Activated naive CD4-positive, alpha-beta T cell treated with anti-CD3 and anti-CD28 coated beads for 36 hours (primary cell): ENCODE measurements at regions of chr5 and their contacts with region 1.

Region 1: DNA sequence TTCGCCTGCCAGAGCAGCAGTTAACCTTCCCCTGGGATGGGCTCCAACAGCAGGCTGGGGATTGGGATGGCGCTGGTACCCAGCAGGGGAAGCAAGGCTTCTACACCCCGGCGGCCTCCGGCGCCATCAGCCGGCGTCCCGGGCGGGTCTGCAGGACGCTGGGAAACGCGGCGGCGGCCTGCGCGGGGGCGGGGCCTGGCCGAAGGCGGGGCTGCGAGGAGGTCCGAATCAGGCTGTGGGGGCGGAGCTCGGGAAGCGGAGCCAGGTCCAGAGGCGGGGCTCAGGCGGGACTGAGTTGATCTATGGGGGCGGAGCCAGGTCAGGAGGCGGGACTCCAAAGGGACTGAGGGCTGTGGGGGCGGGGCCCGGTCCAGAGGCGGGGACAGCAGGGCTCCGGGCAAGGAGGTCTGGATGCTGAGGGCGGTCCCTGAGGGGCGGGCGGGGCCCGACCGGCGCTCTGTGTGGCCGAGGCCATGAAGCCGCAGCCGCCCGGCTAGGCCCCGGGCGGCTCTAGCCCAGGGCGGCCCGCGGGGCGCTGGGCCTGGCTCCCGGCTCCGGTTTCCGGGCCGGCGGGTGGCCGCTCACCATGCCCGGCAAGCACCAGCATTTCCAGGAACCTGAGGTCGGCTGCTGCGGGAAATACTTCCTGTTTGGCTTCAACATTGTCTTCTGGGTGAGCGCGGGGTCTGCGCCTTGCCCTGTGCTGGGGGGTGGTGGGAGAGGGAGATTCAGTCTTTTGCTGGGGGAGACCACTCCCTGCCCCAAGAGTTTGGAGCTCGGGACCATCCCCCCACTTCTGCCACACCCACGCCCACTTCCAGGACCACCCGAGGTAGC is at the start of gene TSPAN17:
- DNase-seq: peak; percentile 100
- H3K4me3 Mint-ChIP-seq: peak within 1 kb of the TSS; percentile 86
- H3K27ac Mint-ChIP-seq: peak within 1 kb of the TSS; percentile 86
- H3K4me1 Mint-ChIP-seq: peaks cover 44% of the 10 kb centered on the region
- H3K27me3 Mint-ChIP-seq: no peaks in the 10 kb centered on the region
- total RNA-seq, gene TSPAN17: 17.2 to 17.4 TPM

Region 2: DNA sequence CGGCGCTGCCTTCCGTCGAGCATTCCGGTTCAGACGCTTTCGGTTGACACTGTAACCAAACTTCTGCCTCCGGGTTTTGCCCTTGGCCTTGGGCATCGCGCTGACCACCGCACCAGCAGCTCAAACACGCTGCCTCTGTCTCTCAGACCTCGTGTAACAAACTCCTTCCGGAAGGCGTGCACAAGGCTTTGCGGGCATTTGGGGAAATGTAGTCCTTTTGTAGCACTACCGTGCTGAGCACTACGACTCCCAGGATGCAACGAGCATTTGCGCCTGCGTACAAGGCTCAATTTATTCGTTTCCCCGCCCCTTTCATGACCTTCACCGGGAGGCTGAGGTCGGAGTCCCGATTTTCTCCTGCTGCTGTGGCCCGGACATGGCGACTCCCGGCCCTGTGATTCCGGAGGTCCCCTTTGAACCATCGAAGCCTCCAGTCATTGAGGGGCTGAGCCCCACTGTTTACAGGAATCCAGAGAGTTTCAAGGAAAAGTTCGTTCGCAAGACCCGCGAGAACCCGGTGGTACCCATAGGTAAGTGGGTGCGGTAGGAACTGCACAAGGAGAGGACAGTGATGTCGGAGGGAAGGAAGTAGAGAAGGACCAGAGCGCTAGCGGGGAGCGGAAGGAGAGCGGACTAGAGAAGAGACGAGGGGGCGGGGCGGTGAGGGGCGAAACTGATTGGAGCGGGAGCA is 258.7 kb before region 1 on chr5 and contains the starts of genes HIGD2A and NOP16:
- CTCF ChIA-PET with region 1: no interaction called
- intact Hi-C with region 1: loop called (anchors 1 kb)
- DNase-seq: peak; percentile 100
- H3K4me3 Mint-ChIP-seq: peak within 1 kb of the TSS; percentile 100
- H3K27ac Mint-ChIP-seq: peak within 1 kb of the TSS; percentile 100
- H3K4me1 Mint-ChIP-seq: peaks cover 33% of the 10 kb centered on the region
- H3K27me3 Mint-ChIP-seq: no peaks in the 10 kb centered on the region
- total RNA-seq, gene HIGD2A: 154 to 155 TPM
- total RNA-seq, gene NOP16: 42.1 to 43.1 TPM

Region 3: DNA sequence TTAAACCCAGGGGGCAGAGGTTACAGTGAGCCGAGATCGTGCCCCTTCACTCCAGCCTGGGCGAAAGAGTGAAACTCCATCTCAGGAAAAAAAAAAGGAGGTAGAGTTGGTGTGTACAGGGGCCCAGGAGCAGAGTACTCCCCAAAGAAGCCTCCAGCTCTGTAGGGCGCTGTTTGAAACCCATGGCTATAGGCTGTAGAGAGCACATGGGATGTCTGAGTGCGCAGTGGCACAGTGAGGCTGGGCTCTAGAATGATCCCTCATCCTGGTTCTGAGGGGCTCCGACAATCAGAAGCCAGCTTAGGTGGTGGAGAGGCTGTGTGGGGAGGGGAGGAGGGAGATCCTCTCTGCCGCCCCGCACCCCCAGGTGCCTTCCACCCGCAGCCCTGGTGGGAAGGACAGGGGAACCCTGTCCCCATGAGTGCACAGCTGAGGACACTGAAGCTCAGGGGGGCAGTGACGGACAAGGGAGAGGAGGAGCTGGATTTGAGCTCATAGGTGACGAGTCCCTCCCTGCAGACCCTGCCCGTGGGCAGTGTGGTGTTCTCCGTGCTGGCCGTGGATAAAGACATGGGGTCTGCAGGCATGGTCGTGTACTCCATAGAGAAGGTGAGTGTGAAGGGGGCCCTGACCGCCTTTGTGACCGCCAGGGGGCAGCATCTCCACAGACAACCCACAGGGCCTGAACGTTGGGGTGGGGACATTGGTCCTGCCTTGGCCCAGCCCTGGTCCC is 73.5 kb before region 1 on chr5:
- CTCF ChIA-PET with region 1: no interaction called
- intact Hi-C with region 1: loop called (anchors 1 kb)
- DNase-seq: peak; percentile 81
- H3K4me3 Mint-ChIP-seq: no peak overlapping the region
- H3K27ac Mint-ChIP-seq: no peak overlapping the region
- H3K4me1 Mint-ChIP-seq: peaks cover 3% of the 10 kb centered on the region
- H3K27me3 Mint-ChIP-seq: no peaks in the 10 kb centered on the region

Region 4: GRCh38 chr5:176619203-176619568 is 28.1 kb before region 1 on chr5:
- CTCF ChIA-PET with region 1: no interaction called
- intact Hi-C with region 1: loop called (anchors 1 kb)
- DNase-seq: peak; percentile 89
- H3K4me3 Mint-ChIP-seq: peak overlapping the region; percentile 48
- H3K27ac Mint-ChIP-seq: no peak overlapping the region
- H3K4me1 Mint-ChIP-seq: peaks cover 18% of the 10 kb centered on the region
- H3K27me3 Mint-ChIP-seq: peaks cover 48% of the 10 kb centered on the region

Region 5: DNA sequence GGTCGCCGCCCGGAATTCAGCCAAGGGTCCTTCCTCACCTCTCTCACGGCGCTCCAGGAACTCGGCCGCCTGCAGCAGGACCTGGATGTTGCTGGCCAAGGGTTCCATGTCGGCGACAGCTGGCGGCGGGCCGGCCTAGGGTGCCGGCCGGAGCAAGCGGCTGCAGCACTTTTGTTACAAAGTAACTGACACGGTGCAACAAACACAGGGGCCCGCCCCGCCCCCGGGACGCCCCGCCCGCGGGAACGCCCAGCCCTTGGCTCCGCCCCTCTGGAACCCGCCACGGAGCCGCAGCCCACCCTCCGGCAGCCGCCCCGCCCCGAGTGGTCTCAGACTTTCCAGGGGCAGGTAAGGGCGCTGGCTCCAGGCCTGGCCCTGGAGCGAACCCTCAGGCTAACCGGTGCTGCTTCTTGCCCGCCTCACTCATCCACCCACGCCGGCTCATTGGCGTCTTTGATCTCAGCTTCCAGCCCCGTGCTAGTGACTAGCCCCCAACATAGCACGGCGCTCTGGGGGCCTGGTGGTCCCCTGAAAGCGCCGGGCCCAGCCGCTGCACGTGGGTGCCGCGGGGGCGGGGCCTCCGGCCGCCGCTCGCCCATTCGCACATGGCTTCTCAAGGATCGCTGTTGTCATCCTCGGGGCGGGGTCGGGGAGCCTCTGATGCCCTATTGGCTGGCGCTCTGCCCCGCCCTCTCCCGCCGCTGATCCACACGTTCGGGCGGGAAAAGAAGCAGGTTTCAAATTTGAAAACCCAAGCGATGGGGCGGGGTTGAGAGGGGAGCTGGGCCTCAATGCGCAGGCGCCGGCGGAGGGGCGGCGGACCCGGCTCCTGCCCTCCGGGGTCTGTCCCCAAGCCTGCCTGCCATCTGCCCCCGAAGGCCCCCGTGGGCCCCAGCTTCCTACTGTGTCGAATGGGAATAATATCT is 664.7 kb after region 1 on chr5 and contains the start of gene MXD3:
- CTCF ChIA-PET with region 1: no interaction called
- intact Hi-C with region 1: loop called (anchors 10 kb)
- DNase-seq: peak; percentile 99
- H3K4me3 Mint-ChIP-seq: peak within 1 kb of the TSS; percentile 97
- H3K27ac Mint-ChIP-seq: peak within 1 kb of the TSS; percentile 82
- H3K4me1 Mint-ChIP-seq: peaks cover 20% of the 10 kb centered on the region
- H3K27me3 Mint-ChIP-seq: peaks cover 3% of the 10 kb centered on the region
- total RNA-seq, gene MXD3: 45.0 to 51.7 TPM